Heart right ventricle (tissue), 16 donors: ENCODE measurements at regions of chr13 and their contacts with region 1.

Region 1: GRCh38 chr13:49443704-49444523 is at the starts of genes CAB39L and SETDB2:
- DNase-seq: peak; percentile 98 to 99
- ATAC-seq: peak; percentile 96 to 100 (median 99)
- H3K4me3 ChIP-seq: peak within 1 kb of the TSS; percentile 45 to 95 (median 86)
- H3K27ac ChIP-seq: peak within 1 kb of the TSS; percentile 85 to 96 (median 94)
- H3K4me1 ChIP-seq: peaks cover 0 to 48% (median 34%) of the 10 kb centered on the region in 9 donors
- H3K27me3 ChIP-seq: no peaks in the 10 kb centered on the region
- CTCF ChIP-seq: peak in 8 of 9 donors; percentile 27 to 66 (median 52)
- total RNA-seq, gene CAB39L: 13.8 to 33.2 (median 17.9) TPM
- total RNA-seq, gene SETDB2: 11.4 to 18.2 (median 13.8) TPM

Region 2: DNA sequence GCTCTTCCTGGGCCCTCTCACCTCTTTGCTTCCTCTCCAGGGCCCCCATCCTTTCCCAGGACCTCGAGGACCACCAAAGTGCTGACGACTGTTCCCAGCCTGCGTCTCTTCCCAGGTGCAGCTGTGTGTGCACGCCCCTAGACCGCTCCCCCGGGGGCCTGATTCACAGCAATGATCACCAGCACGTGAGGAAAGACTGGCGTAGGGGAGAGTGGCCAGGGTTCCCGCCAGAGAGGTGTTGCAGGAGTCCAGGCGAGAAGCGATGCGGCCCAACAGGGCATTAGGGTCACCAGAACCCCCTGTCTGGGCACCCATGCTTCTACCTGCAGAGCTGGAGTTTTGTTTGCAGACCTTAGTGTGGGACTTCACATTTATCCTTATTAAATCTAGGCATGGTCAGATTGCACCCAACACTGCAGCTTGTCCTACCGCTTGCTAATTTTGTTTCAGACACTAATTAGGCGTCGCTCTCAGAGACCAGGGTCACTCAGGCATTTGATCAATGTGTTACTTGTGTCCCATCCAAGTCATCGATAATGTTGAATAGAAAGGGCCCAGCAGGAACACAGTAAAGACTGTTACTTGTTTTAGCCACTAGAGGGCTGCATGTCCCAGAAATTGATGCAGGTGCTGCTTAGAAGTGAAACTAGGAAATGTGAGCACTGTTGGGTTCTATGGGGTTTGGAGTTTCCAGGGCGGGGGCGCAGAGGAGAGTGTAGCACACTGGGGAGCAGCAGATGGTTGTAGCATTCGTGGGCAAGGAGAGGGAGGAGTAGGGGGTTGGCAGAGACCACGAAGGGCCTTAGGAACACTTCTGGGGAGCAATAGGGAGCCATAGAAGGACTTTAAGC is 142.9 kb before region 1 on chr13:
- intact Hi-C with region 1: loop called in 6 of 10 experiments (anchors 2 to 10 kb)
- DNase-seq: peak in 1 of 2 donors; percentile 74
- ATAC-seq: peak; percentile 54 to 86 (median 78)
- H3K4me3 ChIP-seq: peak overlapping the region in 7 of 10 donors; percentile 26 to 46 (median 41)
- H3K27ac ChIP-seq: peak overlapping the region in 3 of 10 donors; percentile 12 to 54 (median 19)
- H3K4me1 ChIP-seq: peaks cover 6 to 30% (median 11%) of the 10 kb centered on the region in 9 donors
- H3K27me3 ChIP-seq: no peaks in the 10 kb centered on the region
- CTCF ChIP-seq: peak; percentile 65 to 89 (median 88)

Region 3: GRCh38 chr13:49348751-49349150 is 95.2 kb before region 1 on chr13:
- intact Hi-C with region 1: no loop called
- DNase-seq: no peak
- ATAC-seq: no peak
- H3K4me3 ChIP-seq: no peak overlapping the region
- H3K27ac ChIP-seq: no peak overlapping the region
- H3K4me1 ChIP-seq: peaks cover 0 to 7% (median 0%) of the 10 kb centered on the region in 9 donors
- H3K27me3 ChIP-seq: no peaks in the 10 kb centered on the region
- CTCF ChIP-seq: no peak

Region 4: GRCh38 chr13:49395451-49395865 is 48.5 kb before region 1 on chr13:
- intact Hi-C with region 1: no loop called
- DNase-seq: no peak
- ATAC-seq: peak; percentile 33 to 87 (median 76)
- H3K4me3 ChIP-seq: no peak overlapping the region
- H3K27ac ChIP-seq: peak overlapping the region in 7 of 10 donors; percentile 19 to 66 (median 44)
- H3K4me1 ChIP-seq: peaks cover 0 to 5% (median 0%) of the 10 kb centered on the region in 9 donors
- H3K27me3 ChIP-seq: no peaks in the 10 kb centered on the region
- CTCF ChIP-seq: no peak

Region 5: GRCh38 chr13:49481788-49482187 is 37.9 kb after region 1 on chr13:
- intact Hi-C with region 1: loop called in 1 of 10 experiments (anchors 1 kb)
- DNase-seq: no peak
- ATAC-seq: no peak
- H3K4me3 ChIP-seq: no peak overlapping the region
- H3K27ac ChIP-seq: no peak overlapping the region
- H3K4me1 ChIP-seq: peaks cover 0 to 10% (median 0%) of the 10 kb centered on the region in 9 donors
- H3K27me3 ChIP-seq: no peaks in the 10 kb centered on the region
- CTCF ChIP-seq: no peak

Region 6: DNA sequence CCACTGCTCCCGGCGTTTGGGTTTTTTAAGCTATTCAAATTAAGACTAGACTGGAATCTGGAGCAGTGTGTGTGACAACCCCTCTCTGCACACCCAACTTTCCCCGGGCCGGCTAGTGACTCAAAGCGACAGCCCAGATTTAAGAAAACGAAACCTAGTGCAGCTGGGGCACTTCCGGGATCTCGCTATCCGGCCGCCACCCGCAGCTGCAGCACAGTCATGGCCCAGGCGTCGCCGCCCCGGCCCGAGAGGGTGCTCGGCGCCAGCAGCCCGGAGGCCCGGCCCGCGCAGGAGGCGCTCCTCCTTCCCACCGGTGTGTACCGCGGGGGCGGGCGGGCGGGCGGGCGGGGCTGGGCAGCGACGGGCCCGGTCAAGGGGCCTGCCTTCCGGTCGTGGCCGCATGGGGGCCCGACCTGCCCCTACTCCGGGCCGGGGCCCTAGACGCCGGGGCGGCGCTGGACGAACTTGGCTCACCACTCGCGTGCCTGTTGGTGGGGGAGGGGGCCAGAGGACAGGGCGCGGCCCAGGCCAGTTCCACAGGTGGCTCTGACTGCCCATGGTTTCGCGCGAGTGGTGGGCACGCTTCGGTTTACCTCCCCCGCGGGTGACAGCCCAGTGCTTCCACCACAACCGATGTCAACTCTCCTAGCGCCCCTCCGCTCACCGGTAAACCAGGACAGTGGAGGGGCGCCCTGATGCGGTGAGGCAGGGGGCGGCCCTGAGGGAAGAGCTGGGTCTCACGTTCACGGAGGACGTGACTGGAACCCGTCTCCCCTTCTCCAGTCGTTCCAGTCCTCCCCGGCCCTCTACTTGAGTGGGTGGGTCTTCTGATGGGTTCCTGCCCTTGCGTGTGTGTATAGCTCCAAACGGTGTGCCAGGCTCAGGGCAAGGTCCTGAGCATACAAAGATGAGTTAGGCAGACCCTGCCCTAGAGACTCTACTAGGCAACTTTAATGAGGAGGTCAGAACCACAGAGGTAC is 52.2 kb after region 1 on chr13 and contains the start of gene PHF11:
- intact Hi-C with region 1: loop called in 2 of 10 experiments (anchors 2 to 10 kb)
- DNase-seq: peak; percentile 79 to 82
- ATAC-seq: peak; percentile 88 to 92 (median 91)
- H3K4me3 ChIP-seq: peak within 1 kb of the TSS; percentile 46 to 84 (median 70)
- H3K27ac ChIP-seq: peak within 1 kb of the TSS; percentile 92 to 98 (median 94)
- H3K4me1 ChIP-seq: peaks cover 0 to 44% (median 9%) of the 10 kb centered on the region in 9 donors
- H3K27me3 ChIP-seq: no peaks in the 10 kb centered on the region
- CTCF ChIP-seq: peak in 5 of 9 donors; percentile 15 to 39 (median 36)
- total RNA-seq, gene PHF11: 16.6 to 43.4 (median 19.6) TPM

Region 7: GRCh38 chr13:49585220-49586157 is 141.6 kb after region 1 on chr13 and contains the start of gene RCBTB1:
- intact Hi-C with region 1: loop called in 1 of 10 experiments (anchors 10 kb)
- DNase-seq: peak; percentile 42 to 73
- ATAC-seq: peak; percentile 97 to 99 (median 98)
- H3K4me3 ChIP-seq: peak within 1 kb of the TSS; percentile 65 to 99 (median 90)
- H3K27ac ChIP-seq: peak within 1 kb of the TSS in 9 of 10 donors; percentile 75 to 90 (median 83)
- H3K4me1 ChIP-seq: peaks cover 0 to 25% (median 17%) of the 10 kb centered on the region in 9 donors
- H3K27me3 ChIP-seq: no peaks in the 10 kb centered on the region
- CTCF ChIP-seq: no peak
- total RNA-seq, gene RCBTB1: 12.9 to 23.5 (median 18.7) TPM